ENCODE measurements at regions of chr16 and their contacts with region 1.

Region 1: GRCh38 chr16:8885674-8886592 is 3.8 kb downstream of the LITAFD start:
- DNase-seq: peak; percentile 50
- H3K4me3 ChIP-seq: no peak overlapping the region
- H3K27ac ChIP-seq: no peak overlapping the region
- H3K4me1 ChIP-seq: peaks cover 11 to 31% (median 29%) of the 10 kb centered on the region in 4 donors
- H3K27me3 ChIP-seq: no peaks in the 10 kb centered on the region
- CTCF ChIP-seq: no peak
- EP300 ChIP-seq: no peak
- POLR2A ChIP-seq: no peak

Region 2: GRCh38 chr16:8660841-8661301 is 225.1 kb before region 1 on chr16:
- in situ Hi-C with region 1: loop called in 3 of 4 experiments (anchors 10 to 25 kb)
- intact Hi-C with region 1: loop called (anchors 5 kb)
- DNase-seq: peak; percentile 73
- H3K4me3 ChIP-seq: no peak overlapping the region
- H3K27ac ChIP-seq: no peak overlapping the region
- H3K4me1 ChIP-seq: no peaks in the 10 kb centered on the region
- H3K27me3 ChIP-seq: no peaks in the 10 kb centered on the region
- CTCF ChIP-seq: peak; percentile 50 to 82 (median 65)
- EP300 ChIP-seq: no peak
- POLR2A ChIP-seq: no peak

Region 3: GRCh38 chr16:8908810-8909468 is 23.0 kb after region 1 on chr16:
- in situ Hi-C with region 1: no loop called
- intact Hi-C with region 1: no loop called
- DNase-seq: no peak
- H3K4me3 ChIP-seq: no peak overlapping the region
- H3K27ac ChIP-seq: peak overlapping the region in 1 of 4 donors; percentile 25
- H3K4me1 ChIP-seq: peaks cover 4 to 42% (median 24%) of the 10 kb centered on the region in 4 donors
- H3K27me3 ChIP-seq: no peaks in the 10 kb centered on the region
- CTCF ChIP-seq: no peak
- EP300 ChIP-seq: no peak
- POLR2A ChIP-seq: no peak

Region 4: DNA sequence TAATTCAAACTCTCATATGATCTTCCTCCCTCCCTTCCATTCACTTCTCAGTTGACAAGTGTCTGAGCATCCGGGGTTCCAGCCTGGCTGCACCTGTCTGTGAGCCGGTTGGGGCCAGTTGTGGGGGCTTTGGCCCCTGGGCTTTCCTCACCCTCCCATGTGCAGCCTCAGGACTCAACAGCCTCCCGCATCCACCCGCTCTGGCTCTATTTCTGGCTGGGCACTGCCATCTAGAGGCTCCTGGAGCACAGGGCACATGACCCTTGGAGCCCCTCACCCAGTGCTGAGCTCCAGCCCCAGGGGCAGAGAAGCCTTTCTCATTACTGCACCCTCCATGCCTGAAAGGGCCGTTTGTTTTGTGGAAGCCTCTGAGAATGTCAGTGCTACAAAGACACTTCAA is 248.8 kb after region 1 on chr16:
- in situ Hi-C with region 1: loop called in 1 of 4 experiments (anchors 25 kb)
- intact Hi-C with region 1: no loop called
- DNase-seq: peak; percentile 63
- H3K4me3 ChIP-seq: no peak overlapping the region
- H3K27ac ChIP-seq: no peak overlapping the region
- H3K4me1 ChIP-seq: peaks cover 0 to 9% (median 6%) of the 10 kb centered on the region in 4 donors
- H3K27me3 ChIP-seq: no peaks in the 10 kb centered on the region
- CTCF ChIP-seq: peak; percentile 39 to 60 (median 51)
- EP300 ChIP-seq: no peak
- POLR2A ChIP-seq: no peak